ENCODE measurements at regions of chr4 and their contacts with region 1.

Region 1: DNA sequence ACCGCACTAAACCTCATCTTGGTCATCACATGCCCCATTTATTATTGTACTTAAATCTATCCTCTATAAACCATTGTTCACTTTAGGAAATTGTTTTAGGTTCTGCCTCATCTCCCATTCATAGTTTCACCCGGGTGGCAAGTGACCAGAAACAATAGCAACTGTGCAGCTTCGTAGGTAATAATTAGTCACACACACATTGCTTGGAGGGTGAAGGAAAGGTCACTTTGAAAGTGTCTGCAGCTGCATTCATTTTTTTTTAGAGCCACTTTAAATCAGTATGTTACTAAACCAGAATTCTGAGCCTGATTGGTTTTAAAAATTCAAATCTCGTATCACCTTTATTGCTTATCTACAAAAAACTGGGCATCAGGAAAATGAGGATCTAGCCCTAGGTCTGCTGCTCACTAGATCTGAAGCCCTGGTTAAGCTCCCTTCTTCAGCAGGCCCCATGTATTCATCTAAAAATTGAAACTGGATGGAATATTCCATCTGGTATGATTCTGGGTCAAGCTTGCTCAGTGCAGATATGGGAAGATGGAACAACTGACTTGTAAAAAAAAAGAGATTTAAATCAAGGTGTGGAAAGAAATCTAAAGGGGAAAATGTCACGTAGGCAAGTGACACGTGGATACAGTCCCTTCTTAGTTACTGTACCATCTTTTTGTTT is 62.4 kb downstream of the LIMCH1 start:
- DNase-seq: no peak
- ATAC-seq: no peak
- H3K4me3 ChIP-seq: no peak overlapping the region
- H3K27ac ChIP-seq: no peak overlapping the region
- H3K4me1 ChIP-seq: peaks cover 31 to 49% of the 10 kb centered on the region in 2 donors
- H3K27me3 ChIP-seq: no peaks in the 10 kb centered on the region
- CTCF ChIP-seq: no peak
- POLR2A ChIP-seq: no peak

Region 2: GRCh38 chr4:41204400-41204978 is 395.9 kb before region 1 on chr4:
- in situ Hi-C with region 1: no loop called
- intact Hi-C with region 1: no loop called
- DNase-seq: peak in 1 of 2 donors; percentile 37
- ATAC-seq: peak in 1 of 2 donors; percentile 37
- H3K4me3 ChIP-seq: no peak overlapping the region
- H3K27ac ChIP-seq: peak overlapping the region; percentile 14 to 43 (median 34)
- H3K4me1 ChIP-seq: peaks cover 37 to 47% of the 10 kb centered on the region in 2 donors
- H3K27me3 ChIP-seq: no peaks in the 10 kb centered on the region
- CTCF ChIP-seq: no peak
- POLR2A ChIP-seq: no peak

Region 3: GRCh38 chr4:41525129-41525528 is 75.2 kb before region 1 on chr4:
- in situ Hi-C with region 1: no loop called
- intact Hi-C with region 1: no loop called
- DNase-seq: no peak
- ATAC-seq: peak; percentile 54 to 66
- H3K4me3 ChIP-seq: no peak overlapping the region
- H3K27ac ChIP-seq: peak overlapping the region in 3 of 4 donors; percentile 32 to 60 (median 55)
- H3K4me1 ChIP-seq: peaks cover 17 to 38% of the 10 kb centered on the region in 2 donors
- H3K27me3 ChIP-seq: no peaks in the 10 kb centered on the region
- CTCF ChIP-seq: no peak
- POLR2A ChIP-seq: no peak

Region 4: GRCh38 chr4:41559940-41560511 is 40.4 kb before region 1 on chr4:
- in situ Hi-C with region 1: no loop called
- intact Hi-C with region 1: no loop called
- DNase-seq: no peak
- ATAC-seq: no peak
- H3K4me3 ChIP-seq: no peak overlapping the region
- H3K27ac ChIP-seq: peak overlapping the region in 2 of 4 donors; percentile 75 to 87
- H3K4me1 ChIP-seq: peaks cover 19 to 42% of the 10 kb centered on the region in 2 donors
- H3K27me3 ChIP-seq: no peaks in the 10 kb centered on the region
- CTCF ChIP-seq: no peak
- POLR2A ChIP-seq: no peak

Region 5: DNA sequence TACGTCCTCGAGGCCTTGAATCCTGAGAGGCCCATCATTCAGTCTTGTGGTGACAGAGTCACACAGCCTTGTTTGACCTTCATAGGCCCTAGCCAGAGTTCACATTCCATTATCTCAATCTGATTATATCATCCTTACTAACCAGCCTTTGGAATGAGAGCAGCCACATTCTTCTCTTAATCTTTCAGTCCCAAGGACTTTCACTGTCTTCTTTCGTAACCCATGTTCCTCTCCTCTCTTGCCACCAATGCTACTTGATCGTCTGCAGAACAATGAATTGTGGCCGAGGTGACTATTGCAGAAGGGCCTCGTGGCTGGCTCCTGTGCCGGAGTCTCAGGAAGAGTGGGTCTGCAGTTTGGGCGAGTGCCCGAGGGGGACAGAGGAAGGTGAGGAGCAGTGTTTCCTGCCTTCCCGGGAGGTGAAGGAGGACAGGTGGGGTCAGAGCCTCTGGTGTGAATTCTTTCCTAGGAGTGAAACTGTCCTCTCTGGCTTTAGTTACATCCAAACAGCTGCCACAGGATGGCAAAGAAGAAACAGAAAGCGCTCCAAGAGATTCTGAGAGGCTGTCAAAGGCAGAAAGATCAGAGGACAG is 32.2 kb after region 1 on chr4:
- in situ Hi-C with region 1: no loop called
- intact Hi-C with region 1: loop called (anchors 1 kb)
- DNase-seq: peak in 1 of 2 donors; percentile 19
- ATAC-seq: peak; percentile 66 to 82
- H3K4me3 ChIP-seq: peak overlapping the region in 1 of 4 donors; percentile 39
- H3K27ac ChIP-seq: peak overlapping the region; percentile 3 to 77 (median 58)
- H3K4me1 ChIP-seq: peaks cover 10 to 16% of the 10 kb centered on the region in 2 donors
- H3K27me3 ChIP-seq: no peaks in the 10 kb centered on the region
- CTCF ChIP-seq: no peak
- POLR2A ChIP-seq: no peak